Heart left ventricle (tissue), 16 donors: ENCODE measurements at regions of chr16 and their contacts with region 1.

Region 1: GRCh38 chr16:88706288-88706964 is at the starts of genes CTU2 and RNF166:
- DNase-seq: peak; percentile 92 to 97 (median 95)
- ATAC-seq: peak; percentile 58 to 92 (median 85)
- H3K4me3 ChIP-seq: peak within 1 kb of the TSS; percentile 76 to 100 (median 97)
- H3K27ac ChIP-seq: peak within 1 kb of the TSS; percentile 61 to 97 (median 86)
- H3K4me1 ChIP-seq: peaks cover under 1 to 59% (median 48%) of the 10 kb centered on the region in 12 donors
- H3K27me3 ChIP-seq: no peaks in the 10 kb centered on the region
- CTCF ChIP-seq: peak in 1 of 12 donors; percentile 20
- POLR2A ChIP-seq: peak; percentile 56 to 92
- total RNA-seq, gene CTU2: 6.5 to 20.8 (median 12.3) TPM
- total RNA-seq, gene RNF166: 9.3 to 28.5 (median 15.4) TPM

Region 2: GRCh38 chr16:88452482-88453216 is 253.8 kb before region 1 on chr16:
- intact Hi-C with region 1: loop called in 1 of 10 experiments (anchors 10 kb)
- DNase-seq: peak; percentile 97 to 99 (median 98)
- ATAC-seq: peak; percentile 87 to 92 (median 92)
- H3K4me3 ChIP-seq: peak overlapping the region; percentile 27 to 85 (median 64)
- H3K27ac ChIP-seq: peak overlapping the region in 11 of 12 donors; percentile 26 to 79 (median 69)
- H3K4me1 ChIP-seq: peaks cover 7 to 45% (median 27%) of the 10 kb centered on the region in 12 donors
- H3K27me3 ChIP-seq: peaks cover 0 to 22% (median 0%) of the 10 kb centered on the region in 9 donors
- CTCF ChIP-seq: no peak
- POLR2A ChIP-seq: no peak

Region 3: DNA sequence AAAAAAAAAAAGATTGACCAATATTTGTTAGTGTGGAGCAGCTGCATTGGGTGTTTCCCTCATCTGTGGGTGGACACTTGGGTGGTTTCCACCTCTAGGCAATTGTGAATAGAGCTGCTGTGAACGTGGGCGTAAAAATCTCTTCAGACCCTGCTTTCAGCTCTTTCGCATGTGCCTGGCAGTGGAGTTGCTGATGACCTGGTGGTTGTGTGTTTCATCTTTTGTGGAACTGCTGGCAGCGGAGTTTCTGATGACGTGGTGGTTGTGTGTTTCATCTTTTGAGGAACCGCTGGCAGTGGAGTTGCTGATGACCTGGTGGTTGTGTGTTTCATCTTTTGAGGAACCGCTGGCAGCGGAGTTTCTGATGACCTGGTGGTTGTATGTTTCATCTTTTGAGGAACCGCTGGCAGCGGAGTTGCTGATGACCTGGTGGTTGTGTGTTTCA is 114.8 kb before region 1 on chr16:
- intact Hi-C with region 1: loop called in 2 of 10 experiments (anchors 10 kb)
- DNase-seq: peak in 4 of 5 donors; percentile 24 to 66 (median 49)
- ATAC-seq: peak in 3 of 4 donors; percentile 27 to 71 (median 46)
- H3K4me3 ChIP-seq: no peak overlapping the region
- H3K27ac ChIP-seq: peak overlapping the region in 1 of 12 donors; percentile 60
- H3K4me1 ChIP-seq: peaks cover 0 to 41% (median 17%) of the 10 kb centered on the region in 12 donors
- H3K27me3 ChIP-seq: no peaks in the 10 kb centered on the region
- CTCF ChIP-seq: no peak
- POLR2A ChIP-seq: no peak

Region 4: DNA sequence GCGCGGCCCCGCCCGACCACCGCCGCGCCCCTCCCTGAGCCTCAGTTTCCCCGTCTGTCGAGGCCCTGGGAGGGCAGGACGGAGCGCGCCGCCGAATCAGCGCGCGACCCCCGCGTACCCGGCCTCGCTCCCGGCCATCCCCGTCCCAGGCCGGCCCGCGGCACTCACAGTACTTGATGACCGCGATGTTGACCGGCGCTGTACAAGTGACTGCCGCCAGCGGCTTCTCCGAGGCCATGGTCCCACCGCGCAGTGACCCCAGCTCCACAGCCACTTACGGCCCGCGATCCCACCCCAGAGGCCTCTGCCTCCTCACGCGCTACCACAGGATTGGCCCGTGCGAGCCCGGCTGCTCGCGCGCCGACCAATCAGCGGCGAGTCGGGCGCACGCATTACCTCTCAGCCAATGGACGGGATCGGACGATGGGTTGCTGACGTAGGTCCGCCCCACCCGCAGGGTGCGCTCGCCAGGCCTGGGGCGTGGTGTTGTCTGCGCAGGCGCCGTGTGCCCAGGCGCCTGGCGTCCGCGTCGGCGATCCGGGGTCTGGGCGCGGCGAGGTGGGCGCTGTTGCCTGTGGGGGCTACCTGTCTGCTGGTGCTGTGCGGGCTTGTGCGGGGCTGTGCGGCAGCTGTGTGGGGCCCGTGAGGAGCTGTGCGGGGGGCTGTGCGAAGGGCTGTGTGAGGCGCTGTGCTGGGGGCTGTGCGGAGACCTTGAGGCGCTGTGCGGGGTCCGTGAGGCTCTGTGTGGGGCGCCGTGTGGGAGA is 43.4 kb before region 1 on chr16 and contains the start of gene MVD:
- intact Hi-C with region 1: loop called in 1 of 10 experiments (anchors 5 kb)
- DNase-seq: peak; percentile 98 to 99 (median 98)
- ATAC-seq: peak; percentile 99
- H3K4me3 ChIP-seq: peak within 1 kb of the TSS; percentile 56 to 100 (median 90)
- H3K27ac ChIP-seq: peak within 1 kb of the TSS; percentile 1 to 97 (median 84)
- H3K4me1 ChIP-seq: peaks cover 0 to 32% (median 25%) of the 10 kb centered on the region in 12 donors
- H3K27me3 ChIP-seq: no peaks in the 10 kb centered on the region
- CTCF ChIP-seq: peak in 2 of 12 donors; percentile 8 to 22
- POLR2A ChIP-seq: peak; percentile 7 to 92
- total RNA-seq, gene MVD: 17.5 to 26.8 (median 20.6) TPM